ENCODE measurements at regions of chr13 and their contacts with region 1.

Region 1: DNA sequence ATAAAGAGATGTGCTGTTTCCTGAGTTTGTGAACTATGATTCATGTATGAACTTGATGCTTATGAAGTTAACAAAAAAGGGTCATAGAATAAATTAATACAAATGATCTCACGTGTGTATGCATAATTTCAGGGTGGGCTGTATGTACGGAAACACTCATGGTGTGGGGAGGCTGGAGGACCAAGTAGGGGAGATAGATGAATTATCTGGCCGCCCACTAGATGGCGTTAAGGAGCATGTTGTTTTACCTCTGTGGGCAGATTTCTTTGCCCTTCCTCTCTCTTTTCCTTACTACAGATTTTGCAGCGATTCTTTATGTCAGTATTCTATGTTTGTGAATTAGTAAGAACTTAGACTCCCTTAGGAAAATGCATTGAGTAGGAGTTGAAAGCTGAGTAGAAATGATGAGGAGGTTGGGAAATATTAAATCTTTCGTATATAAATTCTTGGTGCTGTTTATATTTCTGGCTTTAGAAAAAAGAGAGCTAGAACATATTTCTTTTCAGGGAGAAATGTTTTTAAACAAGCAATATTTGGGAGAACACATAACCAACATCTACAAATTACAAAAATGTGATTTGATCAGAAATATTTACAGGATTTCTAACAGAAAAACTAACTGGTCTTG is 47.4 kb upstream of the TMTC4 start:
- DNase-seq: peak; percentile 17
- H3K4me3 Mint-ChIP-seq: no peak overlapping the region
- H3K27ac Mint-ChIP-seq: no peak overlapping the region
- H3K4me1 Mint-ChIP-seq: no peaks in the 10 kb centered on the region
- H3K27me3 Mint-ChIP-seq: peaks cover 11% of the 10 kb centered on the region

Region 2: GRCh38 chr13:99606324-99607066 is 1115.5 kb before region 1 on chr13:
- intact Hi-C with region 1: no loop called
- DNase-seq: peak; percentile 82
- H3K4me3 Mint-ChIP-seq: peak within 1 kb of the TSS; percentile 89
- H3K27ac Mint-ChIP-seq: peak within 1 kb of the TSS; percentile 81
- H3K4me1 Mint-ChIP-seq: peaks cover 29% of the 10 kb centered on the region
- H3K27me3 Mint-ChIP-seq: peaks cover 4% of the 10 kb centered on the region

Region 3: DNA sequence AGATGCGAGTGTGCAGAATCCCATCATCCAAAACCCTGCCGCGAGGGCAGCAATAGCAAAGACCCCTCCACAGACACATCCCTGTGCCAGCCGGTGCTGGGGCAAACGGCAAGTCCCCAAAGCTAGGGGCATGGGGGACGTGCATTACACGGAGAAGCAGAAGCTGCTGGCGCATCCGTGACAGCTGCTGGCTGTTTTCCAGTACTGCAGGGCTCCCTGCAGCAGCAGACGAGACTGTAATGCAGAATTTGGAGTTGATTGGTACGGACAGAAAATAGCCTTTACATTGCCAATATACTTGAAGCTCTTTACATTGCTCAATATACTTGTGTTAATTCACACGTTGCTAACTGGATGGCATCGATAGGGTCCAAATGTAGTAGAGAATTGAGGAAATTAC is 29.8 kb after region 1 on chr13:
- intact Hi-C with region 1: no loop called
- DNase-seq: no peak
- H3K4me3 Mint-ChIP-seq: no peak overlapping the region
- H3K27ac Mint-ChIP-seq: no peak overlapping the region
- H3K4me1 Mint-ChIP-seq: no peaks in the 10 kb centered on the region
- H3K27me3 Mint-ChIP-seq: peaks cover 1% of the 10 kb centered on the region

Region 4: DNA sequence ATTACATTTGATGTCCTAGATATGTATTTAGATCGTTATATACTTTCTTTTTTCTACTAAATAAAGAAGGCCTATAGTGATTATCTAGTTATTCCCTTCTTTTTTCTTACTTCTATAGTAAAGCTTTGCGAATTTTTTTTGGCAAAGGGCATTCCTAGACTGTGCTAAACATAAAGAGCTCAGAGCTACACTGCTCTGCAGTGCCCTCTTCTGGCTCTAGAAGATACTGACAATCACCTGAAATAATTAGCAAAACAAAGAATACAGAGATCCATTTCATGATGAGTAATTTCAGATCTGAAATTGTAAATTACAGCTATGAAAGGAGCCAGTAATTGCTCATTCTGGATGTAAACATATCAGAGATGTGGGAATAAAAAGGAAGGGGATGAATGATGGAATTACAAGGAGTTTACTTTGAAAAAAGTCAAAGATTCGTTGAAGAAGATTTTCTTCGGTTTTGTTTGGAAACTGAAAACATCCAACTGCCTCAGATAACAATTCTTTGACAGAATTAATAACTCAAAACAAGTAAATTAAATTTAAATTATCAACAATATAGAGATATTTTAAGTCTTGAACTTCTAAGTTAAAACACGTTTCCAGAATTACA is 405.8 kb after region 1 on chr13:
- intact Hi-C with region 1: loop called (anchors 1 kb)
- DNase-seq: no peak
- H3K4me3 Mint-ChIP-seq: no peak overlapping the region
- H3K27ac Mint-ChIP-seq: no peak overlapping the region
- H3K4me1 Mint-ChIP-seq: peaks cover 5% of the 10 kb centered on the region
- H3K27me3 Mint-ChIP-seq: peaks cover 11% of the 10 kb centered on the region

Measured in activated T-helper 1 cell treated with anti-CD3 and anti-CD28 coated beads, Interleukin-12 subunit alpha, Interleukin-12 subunit beta, Interleukin-2, Interleukin-4 antibody, amounts not matched to agents 30 ng/mL and 10 ng/mL and 1 ng/mL, durations not matched to agents 14 hours and 24 hours and 36 hours (primary cell).